AG04449 (cell line): ENCODE measurements at regions of chr21 and their contacts with region 1.

Region 1: GRCh38 chr21:25818121-25818520 is 83.3 kb downstream of the GABPA start:
- DNase-seq: no peak
- H3K4me3 ChIP-seq: no peak overlapping the region
- CTCF ChIP-seq: no peak

Region 2: GRCh38 chr21:25801217-25802014 is 16.7 kb before region 1 on chr21:
- CTCF ChIA-PET with region 1: interaction called, 13 read pairs
- POLR2A ChIA-PET with region 1: no interaction called
- DNase-seq: no peak
- H3K4me3 ChIP-seq: no peak overlapping the region
- CTCF ChIP-seq: peak; percentile 94